ENCODE measurements at regions of chr20 and their contacts with region 1.

Region 1: GRCh38 chr20:3854462-3854871 is 7.8 kb downstream of the MAVS start:
- DNase-seq: peak in 1 of 2 experiments; percentile 39
- ATAC-seq: peak; percentile 68 to 80; a peak in 5 of 6 replicates
- H3K4me3 ChIP-seq: no peak overlapping the region
- H3K27ac ChIP-seq: peak overlapping the region in 1 of 2 experiments; percentile 14; a peak in 1 of 6 replicates
- H3K4me1 ChIP-seq: 0 out of 3 replicates have a peak, but pooled peaks cover 5% of the 10 kb centered on the region
- CTCF ChIP-seq: no peak
- EP300 ChIP-seq: no peak
- POLR2A ChIP-seq: no peak
- RAD21 ChIP-seq: no peak

Region 2: DNA sequence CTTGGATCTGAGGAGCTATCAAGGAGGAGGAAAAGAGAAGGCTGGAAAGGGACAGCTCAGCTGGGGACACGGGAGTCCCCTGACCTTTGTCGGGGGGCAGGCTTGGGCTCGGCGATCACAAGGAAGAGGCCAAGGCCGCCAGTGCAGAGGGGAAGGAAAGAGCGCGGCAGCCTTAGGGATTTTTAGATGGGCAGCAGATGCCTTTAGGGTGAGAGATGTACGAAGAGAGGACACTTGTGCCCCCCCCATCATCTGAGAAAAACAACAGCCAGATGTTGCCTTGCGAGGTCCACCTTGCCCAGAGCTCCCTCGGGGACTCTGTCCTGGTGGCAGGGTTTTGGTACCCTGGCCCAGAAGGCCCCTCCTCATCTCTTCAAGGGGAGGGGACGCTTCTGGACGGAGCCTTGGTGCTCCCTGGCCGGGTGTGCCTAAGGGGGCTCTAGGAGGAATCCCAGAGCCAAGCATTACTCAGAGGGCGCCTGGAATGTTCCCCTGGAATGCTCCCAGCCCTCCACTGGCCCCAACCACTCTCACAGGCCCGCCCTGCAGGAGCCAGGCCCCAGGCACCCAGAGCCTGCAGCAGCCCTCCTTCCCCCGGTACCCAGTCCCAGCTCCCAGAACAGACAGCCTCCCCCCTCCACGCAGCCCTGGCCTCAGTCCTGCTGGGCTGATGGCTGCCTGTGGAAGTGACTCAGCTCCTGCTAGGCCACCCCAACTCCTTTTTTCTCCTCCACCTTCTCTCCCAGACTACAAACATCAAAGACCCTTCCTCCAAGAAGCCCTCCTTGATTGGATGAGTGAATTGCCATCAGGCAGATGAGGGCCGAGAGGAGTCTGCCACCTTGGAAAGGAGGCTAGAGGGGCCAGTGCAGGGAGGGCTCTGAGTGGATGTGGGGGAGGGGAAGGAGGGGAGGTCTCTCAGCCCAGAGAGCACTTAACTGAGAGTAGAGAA is 174.4 kb before region 1 on chr20:
- CTCF ChIA-PET with region 1: interaction called, 11 read pairs
- POLR2A ChIA-PET with region 1: no interaction called
- DNase-seq: no peak
- ATAC-seq: no peak
- H3K4me3 ChIP-seq: no peak overlapping the region
- H3K27ac ChIP-seq: peak overlapping the region in 1 of 2 experiments; percentile 31; a peak in 2 of 6 replicates
- H3K4me1 ChIP-seq: peaks cover 25% of the 10 kb centered on the region; the same call in 2 of the 3 replicates
- CTCF ChIP-seq: no peak
- EP300 ChIP-seq: no peak
- POLR2A ChIP-seq: no peak
- RAD21 ChIP-seq: no peak

Region 3: DNA sequence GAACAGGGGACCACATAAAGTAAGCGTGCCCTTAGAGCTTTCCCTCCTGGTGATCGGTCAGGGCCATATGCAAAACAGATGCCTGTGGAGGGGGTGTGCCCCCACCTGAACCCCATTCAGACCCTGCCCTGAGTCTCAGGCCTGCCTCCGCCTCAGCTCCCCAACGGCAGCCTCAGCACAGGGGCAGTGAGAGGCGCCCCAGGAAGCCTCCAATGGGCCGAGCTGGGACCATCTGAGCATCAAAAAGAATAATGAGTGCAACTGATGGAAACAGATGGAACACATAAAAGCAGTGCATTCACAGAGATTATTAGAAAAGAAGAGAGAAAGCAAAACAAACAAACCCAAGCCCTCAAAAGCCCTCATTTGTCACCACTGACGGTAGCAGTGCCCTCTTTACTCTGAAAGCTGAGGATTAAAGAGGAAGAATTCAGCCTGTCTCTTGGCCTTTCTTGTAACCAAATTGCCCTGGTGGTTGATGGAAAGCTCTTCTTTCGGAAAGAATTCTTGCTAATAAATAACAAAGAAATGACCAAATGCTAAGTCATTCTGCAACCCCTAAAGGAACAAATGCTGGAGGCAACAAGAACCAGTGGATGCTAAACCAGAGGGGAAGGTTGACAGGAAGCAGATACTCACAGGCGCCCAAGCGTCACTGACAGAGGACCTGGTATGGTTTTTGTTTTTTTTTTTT is 93.7 kb before region 1 on chr20:
- CTCF ChIA-PET with region 1: interaction called, 13 read pairs
- POLR2A ChIA-PET with region 1: no interaction called
- DNase-seq: no peak
- ATAC-seq: no peak
- H3K4me3 ChIP-seq: no peak overlapping the region
- H3K27ac ChIP-seq: no peak overlapping the region
- H3K4me1 ChIP-seq: peaks cover under 1% of the 10 kb centered on the region; the same call in 1 of the 3 replicates
- CTCF ChIP-seq: no peak
- EP300 ChIP-seq: no peak
- POLR2A ChIP-seq: no peak
- RAD21 ChIP-seq: no peak

Region 4: DNA sequence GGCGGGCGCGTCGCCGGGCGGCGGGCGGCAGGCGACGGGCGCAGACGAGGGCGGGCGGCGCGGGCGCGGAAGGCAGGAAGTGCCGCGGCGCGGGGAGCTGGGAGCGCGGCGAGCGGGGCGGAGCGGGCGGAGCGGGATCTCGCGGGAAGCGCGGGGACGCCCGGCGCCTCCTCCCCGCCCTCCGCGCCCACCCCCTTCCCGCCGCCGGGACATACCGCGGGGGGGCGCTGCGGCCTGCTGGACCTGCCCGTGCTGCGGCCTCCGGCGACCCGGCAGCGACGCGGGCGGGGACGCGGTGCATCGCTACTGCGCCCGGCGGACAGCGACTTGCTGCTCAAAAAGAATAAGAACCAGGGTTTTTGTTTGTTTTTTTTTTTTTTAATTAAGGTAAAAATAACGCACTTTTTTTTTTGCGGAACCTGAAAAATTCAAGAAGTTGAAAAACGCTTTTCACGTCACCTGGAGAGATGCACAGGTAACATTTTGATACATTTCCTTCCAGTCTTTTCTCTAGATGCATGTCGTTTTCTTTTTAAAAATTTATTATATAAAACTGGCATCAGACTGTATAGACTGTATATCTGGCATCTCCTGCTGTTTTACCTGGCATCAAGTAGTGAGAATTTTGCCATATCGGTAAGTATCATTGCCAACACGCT is 67.7 kb before region 1 on chr20 and contains the start of gene CENPB:
- CTCF ChIA-PET with region 1: interaction called, 97 read pairs
- POLR2A ChIA-PET with region 1: interaction called, 5 read pairs
- DNase-seq: peak; percentile 84 to 91
- ATAC-seq: peak; percentile 86 to 87
- H3K4me3 ChIP-seq: peak within 1 kb of the TSS; percentile 86
- H3K27ac ChIP-seq: peak within 1 kb of the TSS; percentile 88 to 96
- H3K4me1 ChIP-seq: peaks cover 43% of the 10 kb centered on the region
- CTCF ChIP-seq: peak; percentile 99
- EP300 ChIP-seq: no peak
- POLR2A ChIP-seq: peak; percentile 47
- RAD21 ChIP-seq: peak; percentile 81 to 99
- polyA plus RNA-seq, gene CENPB: 35.9 and 42.6 TPM in 2 replicates

Region 5: DNA sequence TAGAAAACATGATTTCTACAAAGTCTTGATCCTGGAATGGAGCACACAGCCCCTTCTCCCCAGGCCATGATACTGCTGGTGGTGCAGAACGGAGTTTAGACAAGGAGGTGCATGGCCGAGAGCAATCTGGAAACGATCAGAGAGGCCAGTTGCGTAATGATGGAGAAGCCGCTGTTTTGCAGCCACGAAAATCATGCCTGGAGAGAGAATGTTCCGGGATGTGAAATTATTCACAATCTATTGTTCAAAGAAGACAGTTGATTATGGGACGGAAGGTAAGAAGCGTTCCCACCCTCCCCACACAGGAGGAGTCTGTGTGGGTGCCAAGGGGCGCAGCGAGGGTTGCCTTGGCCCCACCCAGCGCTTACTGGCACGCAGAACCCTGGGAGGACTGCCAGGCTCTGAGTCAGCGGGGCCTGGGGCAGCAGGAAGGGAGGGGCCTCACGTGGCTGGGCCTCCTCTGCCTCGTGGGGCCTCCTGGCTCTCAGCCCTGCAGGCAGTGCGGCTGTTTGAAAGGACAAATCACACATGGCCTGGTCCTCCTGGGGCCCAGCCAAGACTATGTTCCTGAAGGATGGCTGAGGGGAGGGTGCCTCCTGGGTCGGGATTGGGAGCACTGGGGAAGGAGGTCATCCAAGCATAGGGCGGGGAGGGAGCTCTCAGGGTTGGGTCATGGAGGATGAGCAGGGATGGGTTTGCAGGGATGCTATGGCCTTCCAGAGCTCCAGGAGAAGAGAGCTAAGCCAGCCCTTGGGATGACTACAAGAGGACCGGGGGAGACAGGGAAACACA is 42.8 kb before region 1 on chr20:
- CTCF ChIA-PET with region 1: interaction called, 132 read pairs
- POLR2A ChIA-PET with region 1: no interaction called
- DNase-seq: peak; percentile 97 to 100
- ATAC-seq: peak; percentile 54 to 63
- H3K4me3 ChIP-seq: peak overlapping the region; percentile 37
- H3K27ac ChIP-seq: peak overlapping the region; percentile 95 to 99
- H3K4me1 ChIP-seq: peaks cover 65% of the 10 kb centered on the region
- CTCF ChIP-seq: no peak
- EP300 ChIP-seq: peak; percentile 93 to 98
- POLR2A ChIP-seq: peak; percentile 19
- RAD21 ChIP-seq: peak; percentile 23 to 58

Region 6: GRCh38 chr20:3825526-3825925 is 28.9 kb before region 1 on chr20:
- CTCF ChIA-PET with region 1: interaction called, 132 read pairs
- POLR2A ChIA-PET with region 1: interaction called, 4 read pairs
- DNase-seq: no peak
- ATAC-seq: 0 out of 6 replicates have a peak, but pooled peaks of 1 of the 2 experiments have one; percentile 15
- H3K4me3 ChIP-seq: no peak overlapping the region
- H3K27ac ChIP-seq: no peak overlapping the region
- H3K4me1 ChIP-seq: peaks cover 6% of the 10 kb centered on the region
- CTCF ChIP-seq: no peak
- EP300 ChIP-seq: no peak
- POLR2A ChIP-seq: no peak
- RAD21 ChIP-seq: no peak

Region 7: DNA sequence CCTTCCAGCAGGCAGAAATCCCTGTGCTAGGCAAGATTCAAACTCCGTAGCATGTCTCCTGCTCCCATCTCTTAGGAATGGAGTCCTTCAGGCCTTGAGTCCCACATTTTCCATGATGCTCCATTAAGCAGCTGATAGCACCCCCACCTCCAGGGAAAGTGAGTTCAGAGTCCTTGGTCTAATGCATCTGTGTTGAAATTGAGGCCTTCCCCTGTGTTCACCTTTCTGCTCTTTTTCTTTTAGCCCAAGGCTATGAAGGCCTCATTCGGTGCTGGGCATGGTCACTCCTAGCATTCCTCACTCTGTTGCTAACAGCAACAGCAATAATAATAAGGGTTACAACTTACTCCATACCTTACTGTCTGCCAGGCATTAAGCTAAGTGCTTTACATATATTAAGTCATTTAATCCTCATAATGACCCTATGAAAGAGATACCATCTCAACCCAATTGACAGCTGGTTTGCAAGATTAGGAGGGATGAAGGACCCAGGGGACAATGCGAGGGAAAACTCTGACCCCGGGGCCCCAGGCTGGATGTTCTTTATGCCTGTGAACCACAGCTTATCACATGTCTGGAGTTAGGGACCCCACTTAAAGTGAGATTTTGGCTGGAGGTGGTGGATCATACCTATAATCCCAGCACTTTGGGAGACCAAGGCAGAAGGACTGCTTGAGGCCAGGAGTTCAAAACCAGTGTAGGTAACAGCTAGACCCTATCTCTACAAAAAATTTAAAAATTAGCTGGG is 17.3 kb after region 1 on chr20:
- CTCF ChIA-PET with region 1: interaction called, 95 read pairs
- POLR2A ChIA-PET with region 1: interaction called, 5 read pairs
- DNase-seq: peak; percentile 36 to 47
- ATAC-seq: peak in 1 of 2 experiments; percentile 34; a peak in 2 of 6 replicates
- H3K4me3 ChIP-seq: no peak overlapping the region
- H3K27ac ChIP-seq: no peak overlapping the region
- H3K4me1 ChIP-seq: 0 out of 3 replicates have a peak, but pooled peaks cover 3% of the 10 kb centered on the region
- CTCF ChIP-seq: no peak
- EP300 ChIP-seq: no peak
- POLR2A ChIP-seq: no peak
- RAD21 ChIP-seq: no peak